ENCODE measurements at regions of chr7 and their contacts with region 1.

Region 1: GRCh38 chr7:142535123-142535779 is 214.0 kb upstream of the PRSS1 start:
- DNase-seq: peak; percentile 75

Region 2: GRCh38 chr7:142391191-142391992 is 143.9 kb before region 1 on chr7:
- CTCF ChIA-PET with region 1: no interaction called
- POLR2A ChIA-PET with region 1: no interaction called
- DNase-seq: peak; percentile 46

Region 3: GRCh38 chr7:142523821-142524460 is 11.3 kb before region 1 on chr7:
- CTCF ChIA-PET with region 1: interaction called, 15 read pairs
- POLR2A ChIA-PET with region 1: no interaction called
- DNase-seq: no peak

Region 4: GRCh38 chr7:142546452-142546851 is 11.2 kb after region 1 on chr7:
- CTCF ChIA-PET with region 1: interaction called, 14 read pairs
- POLR2A ChIA-PET with region 1: no interaction called
- DNase-seq: no peak

Region 5: DNA sequence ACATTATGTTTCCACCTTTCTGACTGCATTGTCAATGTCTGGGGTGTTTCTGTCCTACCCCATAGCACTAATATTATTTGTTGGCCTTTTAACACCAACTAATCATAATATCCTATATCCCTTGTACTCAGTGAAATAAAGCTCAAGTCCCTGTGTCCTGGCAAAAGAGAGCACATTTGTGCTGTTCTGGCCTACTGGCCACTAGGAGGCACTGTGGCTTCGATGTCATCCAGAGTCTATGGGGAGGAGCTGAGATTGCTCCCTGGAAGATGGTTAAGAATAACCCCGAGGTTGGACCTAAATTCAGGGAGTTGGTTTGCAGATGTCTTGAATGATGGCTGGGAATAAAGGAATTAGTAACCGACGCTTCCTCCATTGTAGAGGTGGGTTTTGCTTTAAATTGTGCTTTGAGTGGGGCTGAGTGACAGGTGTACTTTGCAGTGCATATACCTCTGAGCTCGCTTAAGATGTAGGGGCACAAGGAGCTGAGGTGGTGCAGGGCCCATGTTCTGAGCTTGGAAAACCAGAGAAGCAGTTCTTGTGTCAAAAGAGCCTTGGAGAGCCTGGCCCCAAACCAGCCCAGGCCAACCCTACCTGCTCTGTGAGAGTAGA is 22.8 kb after region 1 on chr7:
- CTCF ChIA-PET with region 1: interaction called, 17 read pairs
- POLR2A ChIA-PET with region 1: no interaction called
- DNase-seq: peak; percentile 74

Region 6: DNA sequence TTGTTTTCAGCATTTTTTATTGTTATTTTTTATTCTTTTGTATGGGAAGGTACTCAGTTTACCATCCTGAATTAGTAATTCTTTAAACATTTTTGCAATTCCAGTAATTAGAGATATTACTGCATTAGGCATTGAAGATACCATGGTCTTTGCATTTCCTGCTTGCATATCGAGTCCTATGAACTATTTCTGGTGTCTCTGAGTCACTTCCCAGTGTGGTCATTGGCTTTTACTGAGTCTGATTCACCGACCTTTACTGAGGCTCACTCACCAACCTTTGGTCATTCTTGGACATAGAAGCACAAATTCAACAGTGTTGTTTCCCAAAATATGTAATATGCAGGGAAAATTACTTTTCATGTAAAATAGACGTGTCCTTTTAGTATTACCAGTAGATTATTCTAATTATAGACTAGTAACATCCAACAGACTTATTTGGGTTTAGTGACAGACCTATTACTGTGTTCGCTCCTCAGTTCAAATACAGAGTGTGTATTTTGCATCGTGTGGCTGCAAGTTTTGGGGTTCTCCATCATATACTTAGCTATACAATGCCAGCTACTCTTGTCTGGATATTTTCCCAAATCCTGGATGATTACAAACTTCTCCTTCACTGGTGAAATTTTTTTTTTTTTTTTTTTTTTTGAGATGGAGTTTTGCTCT is 33.3 kb after region 1 on chr7:
- CTCF ChIA-PET with region 1: no interaction called
- POLR2A ChIA-PET with region 1: no interaction called
- DNase-seq: no peak

Region 7: DNA sequence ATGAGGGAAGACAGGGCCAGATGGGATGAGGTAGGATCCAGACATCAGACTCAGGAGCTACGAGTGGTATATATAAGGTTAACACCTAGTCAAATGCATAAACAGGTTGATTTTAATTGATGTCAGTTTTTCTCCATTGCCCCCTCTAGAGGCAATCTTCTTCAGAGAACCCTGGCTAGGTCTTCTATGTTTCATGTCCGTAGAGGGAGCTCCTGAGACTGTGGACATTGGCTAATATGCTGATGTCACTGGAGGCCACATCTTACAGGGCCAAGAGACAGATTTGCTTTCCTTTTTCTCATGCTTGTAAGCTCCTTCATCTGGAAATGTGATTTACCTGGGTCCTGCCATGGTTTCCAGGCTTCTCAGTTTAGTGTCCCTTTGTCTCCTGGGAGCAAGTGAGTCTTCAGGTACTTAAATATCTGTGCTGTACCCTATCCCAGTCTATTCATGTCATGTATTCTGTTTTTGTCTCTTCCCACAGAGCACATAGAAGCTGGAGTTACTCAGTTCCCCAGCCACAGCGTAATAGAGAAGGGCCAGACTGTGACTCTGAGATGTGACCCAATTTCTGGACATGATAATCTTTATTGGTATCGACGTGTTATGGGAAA is 52.4 kb after region 1 on chr7:
- CTCF ChIA-PET with region 1: interaction called, 19 read pairs
- POLR2A ChIA-PET with region 1: no interaction called
- DNase-seq: peak; percentile 74

Region 8: GRCh38 chr7:142603870-142604448 is 68.7 kb after region 1 on chr7:
- CTCF ChIA-PET with region 1: interaction called, 11 read pairs
- POLR2A ChIA-PET with region 1: no interaction called
- DNase-seq: peak; percentile 70

Region 9: DNA sequence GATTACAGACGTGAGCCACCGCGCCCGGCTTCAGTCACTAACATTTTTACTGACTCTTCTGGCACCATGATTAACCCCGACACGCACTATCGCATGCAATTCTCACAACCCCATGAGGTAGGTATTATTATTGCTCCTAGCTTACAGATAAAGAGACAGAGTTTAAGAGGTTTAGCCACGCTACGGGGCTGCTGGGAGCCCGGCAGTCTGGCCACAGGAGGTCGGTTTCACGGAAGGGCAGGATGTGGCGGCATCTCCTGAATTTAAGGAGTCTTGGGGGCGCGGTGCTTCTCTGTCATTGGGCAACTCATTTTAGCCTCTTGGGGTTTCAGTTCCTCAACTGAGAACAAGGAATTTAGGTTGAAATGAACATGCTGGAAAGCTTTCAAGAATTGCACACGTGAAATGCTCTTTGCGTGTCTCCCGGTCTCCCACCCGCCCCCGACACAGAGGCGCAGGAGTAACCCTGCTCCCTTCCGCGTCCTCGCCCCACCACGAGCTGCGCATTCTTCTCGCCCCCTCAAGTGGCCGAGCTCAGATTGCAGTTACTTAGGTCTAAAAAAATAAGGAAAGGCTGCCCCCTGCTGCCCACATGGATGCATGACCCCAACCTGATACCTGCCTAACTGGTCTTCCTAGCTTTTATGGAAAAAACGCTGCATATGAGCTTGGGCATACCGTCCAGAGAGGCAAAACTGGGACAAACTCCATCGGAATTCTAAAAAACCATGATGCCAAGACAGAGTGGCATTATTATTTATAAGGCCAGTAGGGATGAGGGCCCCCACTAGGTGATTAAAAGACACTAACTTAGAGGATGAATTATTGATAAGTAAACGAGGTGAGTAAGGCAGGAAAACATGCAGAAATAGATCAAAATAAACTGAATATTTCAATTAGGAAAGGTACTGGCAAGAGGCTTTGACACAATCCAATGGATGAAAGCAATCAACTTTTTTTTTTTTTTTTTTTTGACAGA is 248.0 kb after region 1 on chr7:
- CTCF ChIA-PET with region 1: interaction called, 18 read pairs
- POLR2A ChIA-PET with region 1: no interaction called
- DNase-seq: peak; percentile 89

Measured in HEK293T (cell line).